ENCODE measurements at regions of chr2 and their contacts with region 1.

Region 1: DNA sequence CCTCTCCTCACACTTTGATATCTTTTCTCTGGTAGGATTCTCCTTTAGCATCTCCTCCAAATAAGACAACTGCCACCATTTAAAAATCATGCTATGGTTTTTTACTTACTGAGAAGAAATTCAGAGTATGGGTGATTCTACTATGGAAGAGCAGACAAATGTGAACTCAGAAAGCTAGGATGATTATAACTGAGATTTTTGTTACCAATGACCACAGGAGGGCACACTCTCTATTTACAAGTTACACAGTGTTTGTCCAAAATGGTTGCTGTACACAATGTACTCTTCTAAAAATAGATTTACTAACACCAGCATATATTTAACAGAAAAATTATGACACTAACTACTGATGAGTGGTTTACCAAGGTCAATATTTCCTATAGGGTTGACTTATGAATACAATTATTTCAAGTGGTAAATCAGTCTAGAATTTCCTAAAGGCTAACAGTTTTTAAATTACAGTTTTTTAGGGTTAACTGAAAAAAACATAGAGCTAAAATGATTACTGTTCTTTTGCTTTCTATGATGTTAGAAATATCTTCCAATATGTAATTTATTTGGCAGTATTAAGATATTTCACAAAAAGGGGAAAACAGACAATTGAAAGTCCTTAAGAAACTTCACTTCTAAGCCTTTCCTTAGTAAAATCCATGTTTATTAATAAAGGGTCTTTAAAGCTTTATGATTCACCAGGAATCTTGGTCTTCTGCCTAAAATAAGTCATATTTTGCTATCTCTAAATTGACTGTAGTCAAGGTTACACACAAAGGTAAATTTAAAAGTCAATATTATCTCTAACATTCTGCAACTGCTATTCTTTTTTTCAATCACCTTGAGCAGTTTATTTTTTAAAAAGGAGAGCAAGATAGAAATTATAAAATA is 57.2 kb downstream of the MAP4K3 start:
- DNase-seq: peak; percentile 67
- ATAC-seq: peak; percentile 70
- H3K4me3 ChIP-seq: no peak overlapping the region
- H3K27ac ChIP-seq: peak overlapping the region; percentile 48
- H3K4me1 ChIP-seq: peaks cover 26% of the 10 kb centered on the region
- H3K27me3 ChIP-seq: no peaks in the 10 kb centered on the region
- CTCF ChIP-seq: peak; percentile 84

Region 2: DNA sequence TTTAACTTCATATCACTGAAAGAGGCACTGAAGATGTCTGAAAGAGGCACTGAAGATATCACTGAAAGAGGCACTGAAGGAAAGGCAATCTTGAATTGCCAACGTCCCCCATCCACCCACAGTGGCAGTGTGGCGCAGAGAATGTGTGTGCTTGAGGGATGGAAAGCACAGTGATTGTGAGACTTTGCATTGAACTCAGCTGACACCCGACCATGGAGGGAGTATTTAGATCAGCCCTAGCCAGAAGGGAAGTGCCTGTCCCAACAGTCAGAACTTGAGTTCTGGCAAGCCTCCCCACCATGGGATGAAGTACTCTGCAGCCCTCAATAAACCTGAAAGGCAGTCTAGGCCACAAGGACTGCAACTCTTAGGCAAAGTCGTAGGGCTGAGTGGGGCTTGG is 23.4 kb after region 1 on chr2:
- CTCF ChIA-PET with region 1: no interaction called
- POLR2A ChIA-PET with region 1: interaction called, 16 read pairs
- intact Hi-C with region 1: loop called (anchors 2 kb)
- DNase-seq: no peak
- ATAC-seq: no peak
- H3K4me3 ChIP-seq: no peak overlapping the region
- H3K27ac ChIP-seq: no peak overlapping the region
- H3K4me1 ChIP-seq: peaks cover 41% of the 10 kb centered on the region
- H3K27me3 ChIP-seq: no peaks in the 10 kb centered on the region
- CTCF ChIP-seq: no peak

Region 3: GRCh38 chr2:39481611-39482010 is 101.7 kb after region 1 on chr2:
- CTCF ChIA-PET with region 1: no interaction called
- POLR2A ChIA-PET with region 1: no interaction called
- intact Hi-C with region 1: no loop called
- DNase-seq: peak; percentile 75
- ATAC-seq: peak; percentile 84
- H3K4me3 ChIP-seq: no peak overlapping the region
- H3K27ac ChIP-seq: peak overlapping the region; percentile 46
- H3K4me1 ChIP-seq: peaks cover 17% of the 10 kb centered on the region
- H3K27me3 ChIP-seq: no peaks in the 10 kb centered on the region
- CTCF ChIP-seq: no peak

Region 4: DNA sequence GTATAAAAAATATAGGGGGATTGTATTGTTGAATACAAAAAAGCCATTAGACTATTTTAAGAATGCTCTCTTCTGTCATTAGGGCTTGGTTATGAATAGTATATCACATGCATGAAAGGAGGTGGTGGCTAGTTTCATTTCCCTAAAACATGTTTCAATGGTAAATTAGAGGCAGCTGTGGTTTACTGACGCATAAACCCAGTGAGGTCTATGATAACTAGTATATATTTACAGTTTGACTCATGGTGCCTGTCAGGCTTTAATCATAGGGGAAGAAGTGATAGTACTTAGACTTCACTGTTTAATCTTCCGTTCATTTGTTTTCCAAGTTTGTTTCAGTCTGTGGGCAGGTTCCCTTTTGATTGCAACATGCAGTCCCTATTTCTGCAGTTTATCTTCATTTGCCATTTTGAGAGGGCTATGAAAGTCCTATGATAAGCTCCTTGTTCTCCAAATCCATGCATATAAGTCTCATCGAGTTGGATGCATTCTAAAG is 112.3 kb after region 1 on chr2:
- CTCF ChIA-PET with region 1: interaction called, 4 read pairs
- POLR2A ChIA-PET with region 1: no interaction called
- intact Hi-C with region 1: loop called (anchors 2 kb)
- DNase-seq: peak; percentile 97
- ATAC-seq: peak; percentile 76
- H3K4me3 ChIP-seq: peak overlapping the region; percentile 26; the same call in 1 of the 2 replicates
- H3K27ac ChIP-seq: peak overlapping the region; percentile 95
- H3K4me1 ChIP-seq: peaks cover 83% of the 10 kb centered on the region
- H3K27me3 ChIP-seq: no peaks in the 10 kb centered on the region
- CTCF ChIP-seq: no peak

Region 5: GRCh38 chr2:39504790-39505335 is 125.0 kb after region 1 on chr2:
- CTCF ChIA-PET with region 1: no interaction called
- POLR2A ChIA-PET with region 1: no interaction called
- intact Hi-C with region 1: loop called (anchors 5 kb)
- DNase-seq: peak; percentile 75
- ATAC-seq: peak; percentile 59
- H3K4me3 ChIP-seq: no peak overlapping the region
- H3K27ac ChIP-seq: peak overlapping the region; percentile 98
- H3K4me1 ChIP-seq: peaks cover 42% of the 10 kb centered on the region
- H3K27me3 ChIP-seq: no peaks in the 10 kb centered on the region
- CTCF ChIP-seq: no peak

Region 6: DNA sequence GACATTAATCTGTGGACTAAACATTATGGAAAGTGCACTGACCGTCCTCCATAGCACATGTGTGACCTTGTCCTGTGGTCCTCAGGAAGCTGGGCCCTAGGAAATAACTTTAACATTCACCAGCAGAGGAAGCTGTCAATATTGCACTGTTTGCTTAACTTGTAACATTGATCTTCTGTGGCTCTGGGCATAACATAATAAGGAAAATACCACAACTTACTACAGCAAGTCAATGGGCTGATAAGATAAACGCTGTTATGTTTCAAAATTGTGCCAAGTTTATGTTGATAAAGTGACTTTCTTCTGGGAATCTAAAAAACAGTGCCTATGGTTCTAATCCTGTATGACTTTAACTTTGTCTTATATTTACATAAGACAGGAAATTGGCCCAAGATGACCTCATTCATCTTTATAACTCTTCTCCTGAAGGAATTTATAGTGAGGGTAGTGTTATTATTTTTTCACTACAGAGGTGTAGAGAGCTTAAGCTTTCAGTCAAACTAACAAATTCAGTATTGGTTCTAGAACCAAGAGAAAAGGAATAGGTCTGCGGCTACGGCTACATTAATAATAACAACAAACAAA is 170.9 kb after region 1 on chr2:
- CTCF ChIA-PET with region 1: no interaction called
- POLR2A ChIA-PET with region 1: no interaction called
- intact Hi-C with region 1: no loop called
- DNase-seq: peak; percentile 62
- ATAC-seq: peak; percentile 83
- H3K4me3 ChIP-seq: no peak overlapping the region; the same call in 1 of the 2 replicates
- H3K27ac ChIP-seq: peak overlapping the region; percentile 57
- H3K4me1 ChIP-seq: peaks cover 30% of the 10 kb centered on the region
- H3K27me3 ChIP-seq: no peaks in the 10 kb centered on the region
- CTCF ChIP-seq: no peak

Region 7: DNA sequence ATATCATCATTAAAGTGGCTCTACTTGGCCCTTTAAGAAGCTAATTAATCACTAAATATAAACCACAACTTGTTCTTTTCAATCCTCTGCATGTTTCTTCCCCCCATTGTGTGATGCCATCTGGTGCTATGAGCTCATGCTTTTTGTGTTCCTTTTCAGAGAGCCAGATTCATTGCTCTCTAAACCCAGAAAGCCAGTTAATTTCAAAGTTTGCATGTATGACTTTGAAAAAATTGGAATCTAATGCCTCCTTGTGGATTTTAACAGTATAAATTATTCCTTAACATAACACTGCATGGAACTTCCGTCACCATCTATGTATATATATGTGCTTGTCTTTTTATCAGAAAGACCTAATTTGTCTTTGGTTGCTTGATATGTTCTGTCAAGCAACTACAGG is 317.0 kb after region 1 on chr2:
- CTCF ChIA-PET with region 1: no interaction called
- POLR2A ChIA-PET with region 1: no interaction called
- intact Hi-C with region 1: loop called (anchors 5 kb)
- DNase-seq: peak; percentile 65
- ATAC-seq: peak; percentile 88
- H3K4me3 ChIP-seq: no peak overlapping the region
- H3K27ac ChIP-seq: no peak overlapping the region
- H3K4me1 ChIP-seq: no peaks in the 10 kb centered on the region
- H3K27me3 ChIP-seq: no peaks in the 10 kb centered on the region
- CTCF ChIP-seq: peak; percentile 79